ENCODE measurements at regions of chr3 and their contacts with region 1.

Region 1: DNA sequence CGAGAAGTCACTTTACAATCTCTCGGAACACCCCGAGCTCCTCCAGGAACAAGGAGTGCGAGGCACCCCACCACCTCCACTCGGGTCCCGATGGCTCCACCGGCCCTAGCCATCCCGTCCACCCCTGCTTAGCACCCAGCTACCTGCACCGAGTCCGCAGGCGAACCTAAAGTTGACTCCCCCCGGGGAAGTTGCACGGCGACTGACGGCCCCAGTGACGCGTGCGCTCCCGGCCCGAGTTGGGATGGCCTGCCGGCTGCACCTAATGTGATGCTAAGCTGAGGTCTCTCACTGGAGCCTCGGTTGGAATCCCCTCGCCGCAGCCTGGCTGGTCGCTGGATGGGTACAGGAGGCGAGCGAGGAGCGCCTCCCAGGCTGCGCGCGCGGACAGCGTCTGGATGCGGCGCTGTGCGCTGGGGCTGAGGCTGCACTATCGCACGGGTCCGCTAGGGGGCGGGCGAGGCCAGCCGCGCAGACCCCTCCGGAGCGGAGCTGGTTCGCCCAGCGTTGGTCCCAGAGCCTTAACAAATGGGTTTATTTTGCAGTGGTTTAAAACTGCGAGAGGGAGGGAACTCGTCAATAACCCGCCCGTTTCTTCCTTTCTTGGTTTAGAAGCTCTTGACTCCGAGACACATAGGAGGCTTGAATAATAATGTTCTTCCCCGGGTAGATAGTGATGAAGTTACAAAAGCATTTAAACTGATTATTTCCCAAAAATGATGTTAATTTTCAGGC is at the start of gene OXTR:
- H3K4me3 ChIP-seq: peak within 1 kb of the TSS; percentile 30
- H3K27ac ChIP-seq: no peak within 1 kb of the TSS
- H3K4me1 ChIP-seq: no peaks in the 10 kb centered on the region
- CTCF ChIP-seq: peak; percentile 96

Region 2: DNA sequence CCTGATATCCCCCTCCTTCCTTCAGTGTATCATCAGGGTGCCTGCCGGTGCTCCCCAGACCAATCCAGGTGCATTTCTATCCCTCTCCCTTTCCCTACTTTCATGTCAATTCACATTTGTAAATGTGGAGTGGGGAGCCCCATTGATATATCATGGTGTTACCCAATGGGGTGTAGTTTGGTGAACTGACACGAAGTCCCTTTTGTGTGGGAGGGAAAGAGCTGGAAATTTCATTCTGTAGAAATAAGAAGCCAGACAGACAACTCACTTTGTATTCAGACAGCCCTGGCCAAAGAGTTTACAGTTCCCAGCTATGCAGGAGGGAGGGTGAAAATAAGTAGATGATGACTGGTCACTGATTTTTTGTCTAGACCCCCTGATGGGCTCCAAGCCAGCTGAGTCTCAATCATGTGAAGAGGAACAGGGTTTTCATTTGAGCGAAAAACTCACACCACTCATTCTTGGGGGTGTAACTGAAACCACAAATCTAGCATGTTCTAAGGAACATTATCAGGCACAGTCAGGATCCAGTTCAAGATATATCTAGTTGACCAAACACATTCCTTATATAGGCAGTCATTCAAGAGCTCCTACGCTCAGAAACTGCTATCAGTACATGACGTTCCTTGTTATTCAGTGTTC is 208.8 kb before region 1 on chr3:
- CTCF ChIA-PET with region 1: no interaction called
- POLR2A ChIA-PET with region 1: no interaction called
- H3K4me3 ChIP-seq: no peak overlapping the region
- H3K27ac ChIP-seq: no peak overlapping the region
- H3K4me1 ChIP-seq: peaks cover 5% of the 10 kb centered on the region
- CTCF ChIP-seq: no peak

Region 3: DNA sequence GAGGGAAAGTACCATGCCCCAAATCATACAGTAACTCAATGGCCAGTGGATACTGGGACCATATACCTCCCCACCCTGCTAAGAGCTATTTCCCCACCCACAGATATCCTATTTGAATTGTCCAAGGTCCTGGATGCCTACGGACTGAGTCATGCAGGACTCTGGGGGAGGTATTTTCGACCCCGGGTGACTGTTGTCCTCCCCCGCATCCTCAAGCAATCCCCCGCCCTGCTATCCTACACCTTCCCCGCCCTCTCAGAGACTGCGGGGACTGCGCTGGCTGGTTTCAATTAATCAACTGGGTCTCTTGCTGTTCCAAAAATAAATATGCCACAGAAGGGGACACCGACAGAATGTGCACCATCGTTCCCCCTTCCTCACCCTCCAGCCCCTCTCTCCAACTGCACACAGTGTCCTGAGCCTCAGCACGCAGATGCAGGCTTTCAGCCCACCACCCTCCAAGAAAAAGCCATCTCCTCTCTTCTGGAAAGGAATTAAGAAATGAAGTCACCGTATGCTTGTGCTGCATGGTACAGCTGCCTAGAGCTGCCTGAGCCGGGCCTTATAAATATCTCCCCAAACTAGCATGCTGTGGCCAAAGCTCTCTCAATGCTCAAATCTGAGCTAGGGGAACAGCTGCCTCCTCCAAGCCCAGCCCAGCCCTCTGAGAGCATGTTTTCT is 27.5 kb before region 1 on chr3:
- CTCF ChIA-PET with region 1: interaction called, 25 read pairs
- POLR2A ChIA-PET with region 1: no interaction called
- H3K4me3 ChIP-seq: no peak overlapping the region
- H3K27ac ChIP-seq: no peak overlapping the region
- H3K4me1 ChIP-seq: peaks cover 11% of the 10 kb centered on the region; the same call in 1 of the 2 replicates
- CTCF ChIP-seq: no peak

Region 4: GRCh38 chr3:8757551-8758518 is 11.4 kb before region 1 on chr3:
- CTCF ChIA-PET with region 1: interaction called, 25 read pairs
- POLR2A ChIA-PET with region 1: no interaction called
- H3K4me3 ChIP-seq: no peak overlapping the region
- H3K27ac ChIP-seq: no peak overlapping the region
- H3K4me1 ChIP-seq: no peaks in the 10 kb centered on the region
- CTCF ChIP-seq: no peak

Region 5: DNA sequence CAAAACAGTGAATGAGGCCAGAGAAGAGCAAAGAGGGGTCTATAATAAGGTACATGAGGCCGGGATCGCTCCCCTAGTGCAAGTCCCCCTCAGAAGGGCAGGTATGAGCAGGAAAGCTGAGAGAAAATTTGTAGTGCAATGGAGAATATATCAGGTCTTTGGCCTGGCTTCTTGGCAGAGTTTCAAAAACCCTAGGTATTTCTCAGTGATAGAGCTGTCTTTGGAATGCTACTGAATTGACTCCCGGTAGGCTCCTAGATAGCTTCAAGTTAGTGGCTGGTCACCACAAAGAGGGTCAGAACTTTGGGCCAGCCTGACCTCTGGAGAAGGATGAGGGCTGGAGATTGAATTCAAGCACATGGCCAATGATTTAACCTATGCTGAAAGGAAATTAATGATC is 30.8 kb after region 1 on chr3:
- CTCF ChIA-PET with region 1: interaction called, 18 read pairs
- POLR2A ChIA-PET with region 1: no interaction called
- H3K4me3 ChIP-seq: no peak overlapping the region
- H3K27ac ChIP-seq: no peak overlapping the region
- H3K4me1 ChIP-seq: no peaks in the 10 kb centered on the region
- CTCF ChIP-seq: no peak

Region 6: GRCh38 chr3:8938021-8938420 is 168.8 kb after region 1 on chr3:
- CTCF ChIA-PET with region 1: interaction called, 14 read pairs
- POLR2A ChIA-PET with region 1: no interaction called
- H3K4me3 ChIP-seq: no peak overlapping the region
- H3K27ac ChIP-seq: no peak overlapping the region
- H3K4me1 ChIP-seq: no peaks in the 10 kb centered on the region
- CTCF ChIP-seq: no peak

Measured in HEK293 (cell line).